ENCODE measurements at regions of chr15 and their contacts with region 1.

Region 1: GRCh38 chr15:71752604-71753289 is 57.6 kb upstream of the NR2E3 start:
- DNase-seq: peak; percentile 82
- H3K4me3 Mint-ChIP-seq: no peak overlapping the region
- H3K27ac Mint-ChIP-seq: peak overlapping the region; percentile 78
- H3K4me1 Mint-ChIP-seq: peaks cover 61% of the 10 kb centered on the region
- H3K27me3 Mint-ChIP-seq: no peaks in the 10 kb centered on the region
- CTCF ChIP-seq: peak; percentile 58

Region 2: DNA sequence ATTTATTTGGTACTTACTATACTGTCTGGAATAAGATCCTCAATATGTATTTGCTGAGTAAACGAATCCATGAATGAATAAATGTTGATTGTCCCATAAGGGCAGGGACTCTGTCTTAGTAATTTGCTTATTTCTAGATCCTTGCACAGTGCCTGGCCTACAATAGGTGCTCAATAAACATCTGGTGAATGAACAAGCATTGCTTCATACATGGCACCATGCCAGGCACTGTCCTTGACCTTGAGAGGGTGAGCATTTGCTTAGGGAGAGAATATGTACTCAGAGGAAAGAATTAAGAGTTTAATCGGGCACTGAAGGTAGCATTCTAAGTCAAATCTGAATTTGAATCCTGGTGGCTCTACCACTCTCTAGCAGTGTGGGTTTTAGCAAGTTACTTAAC is 355.4 kb before region 1 on chr15:
- CTCF ChIA-PET with region 1: no interaction called
- intact Hi-C with region 1: no loop called
- DNase-seq: no peak
- H3K4me3 Mint-ChIP-seq: no peak overlapping the region
- H3K27ac Mint-ChIP-seq: no peak overlapping the region
- H3K4me1 Mint-ChIP-seq: no peaks in the 10 kb centered on the region
- H3K27me3 Mint-ChIP-seq: no peaks in the 10 kb centered on the region
- CTCF ChIP-seq: no peak

Region 3: GRCh38 chr15:71773206-71773859 is 20.6 kb after region 1 on chr15:
- CTCF ChIA-PET with region 1: interaction called, 10 read pairs
- intact Hi-C with region 1: no loop called
- DNase-seq: no peak
- H3K4me3 Mint-ChIP-seq: no peak overlapping the region
- H3K27ac Mint-ChIP-seq: no peak overlapping the region
- H3K4me1 Mint-ChIP-seq: peaks cover 7% of the 10 kb centered on the region
- H3K27me3 Mint-ChIP-seq: no peaks in the 10 kb centered on the region
- CTCF ChIP-seq: no peak

Region 4: DNA sequence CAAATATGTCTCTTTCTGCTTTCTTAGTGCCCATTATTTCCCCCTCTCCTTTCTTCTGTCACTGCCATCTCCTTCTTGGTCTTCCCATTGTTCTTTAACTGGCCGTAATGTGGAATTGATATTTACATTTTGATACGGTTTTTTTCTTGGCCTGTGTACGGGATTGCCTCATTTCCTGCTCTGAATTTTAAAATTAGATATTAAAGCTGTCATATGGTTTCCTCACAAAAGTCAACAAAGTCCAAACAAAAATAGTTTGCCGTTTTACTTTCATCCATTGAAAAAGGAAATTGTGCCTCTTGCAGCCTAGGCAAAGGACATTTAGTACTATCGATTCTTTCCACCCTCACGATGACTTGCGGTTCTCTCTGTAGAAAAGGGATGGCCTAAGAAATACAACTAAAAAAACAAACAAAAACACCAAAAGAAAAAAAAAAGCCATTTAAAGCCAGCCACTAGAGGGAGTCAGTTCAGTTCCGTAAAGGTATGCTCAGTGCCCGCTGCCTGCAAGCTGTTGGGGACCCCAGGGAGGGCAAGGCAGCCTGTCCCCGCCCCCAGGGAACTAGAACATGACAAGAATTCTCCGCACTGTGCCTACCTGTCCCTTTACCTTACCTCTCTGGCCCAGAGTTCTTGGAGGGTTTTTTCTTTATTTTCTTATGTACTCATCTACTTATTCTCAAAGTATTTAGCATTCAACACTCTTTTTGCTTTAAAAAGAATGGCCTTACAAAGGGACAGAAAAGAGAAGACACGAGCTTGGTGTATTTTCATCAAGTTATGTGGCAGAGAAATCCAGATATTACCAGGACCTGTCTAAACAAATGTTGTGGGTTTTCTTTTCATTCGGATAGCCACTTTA is 27.6 kb after region 1 on chr15:
- CTCF ChIA-PET with region 1: interaction called, 14 read pairs
- intact Hi-C with region 1: no loop called
- DNase-seq: peak; percentile 59
- H3K4me3 Mint-ChIP-seq: peak overlapping the region; percentile 7
- H3K27ac Mint-ChIP-seq: peak overlapping the region; percentile 78
- H3K4me1 Mint-ChIP-seq: peaks cover 47% of the 10 kb centered on the region
- H3K27me3 Mint-ChIP-seq: no peaks in the 10 kb centered on the region
- CTCF ChIP-seq: peak; percentile 62

Region 5: GRCh38 chr15:71790086-71790854 is 37.5 kb after region 1 on chr15:
- CTCF ChIA-PET with region 1: interaction called, 45 read pairs
- intact Hi-C with region 1: loop called (anchors 2 kb)
- DNase-seq: peak; percentile 89
- H3K4me3 Mint-ChIP-seq: peak overlapping the region; percentile 42
- H3K27ac Mint-ChIP-seq: peak overlapping the region; percentile 83
- H3K4me1 Mint-ChIP-seq: peaks cover 57% of the 10 kb centered on the region
- H3K27me3 Mint-ChIP-seq: no peaks in the 10 kb centered on the region
- CTCF ChIP-seq: no peak

Region 6: DNA sequence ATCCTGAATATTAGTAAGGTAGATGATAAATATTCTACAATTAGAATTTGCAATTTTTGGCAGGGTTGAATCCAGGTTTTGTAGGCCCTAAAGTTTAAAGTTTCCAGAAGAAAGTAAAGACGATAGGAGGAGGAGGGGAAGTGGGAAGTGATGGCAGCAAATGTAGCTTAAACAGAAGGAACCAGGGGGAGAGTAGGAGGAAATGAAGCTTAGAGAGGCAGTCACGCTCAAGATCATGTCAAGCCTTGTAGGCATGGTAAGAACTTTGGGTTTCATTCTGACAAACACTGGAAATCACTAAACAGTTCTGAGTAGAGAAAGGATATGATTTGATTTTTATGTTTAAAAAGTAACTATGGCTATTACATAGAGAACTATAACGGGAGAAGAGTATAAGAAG is 121.5 kb after region 1 on chr15:
- CTCF ChIA-PET with region 1: no interaction called
- intact Hi-C with region 1: no loop called
- DNase-seq: no peak
- H3K4me3 Mint-ChIP-seq: no peak overlapping the region
- H3K27ac Mint-ChIP-seq: no peak overlapping the region
- H3K4me1 Mint-ChIP-seq: no peaks in the 10 kb centered on the region
- H3K27me3 Mint-ChIP-seq: no peaks in the 10 kb centered on the region
- CTCF ChIP-seq: no peak

Region 7: DNA sequence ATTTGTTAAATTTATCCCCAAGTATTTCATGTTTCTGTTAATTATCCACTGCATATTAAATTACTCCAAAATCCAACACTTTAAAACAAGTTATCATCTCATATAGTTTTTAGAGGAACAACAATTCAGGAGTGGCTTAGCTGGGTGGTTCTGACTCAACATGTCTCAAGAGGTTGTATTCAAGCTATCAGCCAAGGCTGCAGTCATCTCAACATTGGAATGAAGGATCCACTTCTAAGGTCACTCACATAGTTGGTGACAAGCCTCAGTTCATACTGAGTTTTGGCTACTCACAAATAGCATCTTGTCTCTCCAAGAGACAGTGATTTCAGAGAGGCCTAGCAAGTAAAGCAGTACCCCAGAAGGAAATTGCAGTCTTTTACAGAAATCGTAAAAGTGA is 192.3 kb after region 1 on chr15:
- CTCF ChIA-PET with region 1: no interaction called
- intact Hi-C with region 1: no loop called
- DNase-seq: no peak
- H3K4me3 Mint-ChIP-seq: no peak overlapping the region
- H3K27ac Mint-ChIP-seq: no peak overlapping the region
- H3K4me1 Mint-ChIP-seq: no peaks in the 10 kb centered on the region
- H3K27me3 Mint-ChIP-seq: no peaks in the 10 kb centered on the region
- CTCF ChIP-seq: no peak